ENCODE measurements at regions of chr5 and their contacts with region 1.

Region 1: DNA sequence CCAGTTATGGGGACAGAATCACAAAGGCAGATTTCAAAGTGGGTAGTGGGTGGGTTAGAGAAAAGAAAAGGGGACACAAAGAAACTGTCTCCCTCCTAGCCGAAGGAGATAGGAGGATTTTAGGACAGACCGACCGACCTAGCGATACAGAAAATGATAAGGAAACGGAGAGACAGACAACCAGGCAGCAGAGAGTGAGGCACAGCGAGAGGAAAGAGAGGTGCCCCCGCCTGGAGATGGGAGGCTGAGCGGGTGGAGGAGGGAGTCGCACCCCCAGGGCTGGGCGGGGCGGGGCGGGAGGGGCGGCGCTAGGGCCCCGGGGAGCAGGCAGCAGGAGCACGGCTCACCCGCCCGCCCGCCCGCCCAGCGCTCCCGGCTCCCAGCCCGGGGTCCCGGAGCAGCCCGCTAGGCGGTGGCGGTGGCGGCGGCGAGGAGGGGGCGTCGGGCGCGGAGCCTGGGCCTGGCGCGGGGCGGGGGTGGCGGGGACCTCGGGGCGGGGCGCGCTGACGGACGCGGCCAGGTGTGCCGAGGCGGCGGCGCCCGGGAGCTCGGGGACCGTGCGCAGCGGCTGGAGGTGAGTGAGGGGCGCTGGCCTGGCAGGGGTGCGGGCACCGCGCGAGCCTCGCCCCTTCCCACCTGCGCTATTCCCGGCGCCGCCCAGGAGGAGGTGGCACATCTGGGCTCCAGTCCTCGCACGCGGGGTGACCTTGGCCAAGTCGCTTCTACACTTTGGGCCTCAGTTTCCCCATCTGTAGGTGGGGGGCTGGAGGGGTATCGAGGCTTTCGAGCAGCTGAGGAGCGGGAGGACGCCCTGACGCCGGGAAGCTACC is 15.9 kb upstream of the SYNPO start:
- DNase-seq: peak; percentile 54
- ATAC-seq: peak; percentile 34
- H3K4me3 ChIP-seq: peak overlapping the region; percentile 46 to 83 (median 75)
- H3K4me3 Mint-ChIP-seq: peak overlapping the region; percentile 93
- H3K27ac ChIP-seq: peak overlapping the region in 1 of 2 donors; percentile 41
- H3K27ac Mint-ChIP-seq: peak overlapping the region; percentile 78
- H3K4me1 ChIP-seq: peaks cover 45 to 48% of the 10 kb centered on the region in 2 donors
- H3K4me1 Mint-ChIP-seq: peaks cover 55% of the 10 kb centered on the region
- H3K27me3 ChIP-seq: no peaks in the 10 kb centered on the region
- H3K27me3 Mint-ChIP-seq: no peaks in the 10 kb centered on the region
- CTCF ChIP-seq: no peak

Region 2: DNA sequence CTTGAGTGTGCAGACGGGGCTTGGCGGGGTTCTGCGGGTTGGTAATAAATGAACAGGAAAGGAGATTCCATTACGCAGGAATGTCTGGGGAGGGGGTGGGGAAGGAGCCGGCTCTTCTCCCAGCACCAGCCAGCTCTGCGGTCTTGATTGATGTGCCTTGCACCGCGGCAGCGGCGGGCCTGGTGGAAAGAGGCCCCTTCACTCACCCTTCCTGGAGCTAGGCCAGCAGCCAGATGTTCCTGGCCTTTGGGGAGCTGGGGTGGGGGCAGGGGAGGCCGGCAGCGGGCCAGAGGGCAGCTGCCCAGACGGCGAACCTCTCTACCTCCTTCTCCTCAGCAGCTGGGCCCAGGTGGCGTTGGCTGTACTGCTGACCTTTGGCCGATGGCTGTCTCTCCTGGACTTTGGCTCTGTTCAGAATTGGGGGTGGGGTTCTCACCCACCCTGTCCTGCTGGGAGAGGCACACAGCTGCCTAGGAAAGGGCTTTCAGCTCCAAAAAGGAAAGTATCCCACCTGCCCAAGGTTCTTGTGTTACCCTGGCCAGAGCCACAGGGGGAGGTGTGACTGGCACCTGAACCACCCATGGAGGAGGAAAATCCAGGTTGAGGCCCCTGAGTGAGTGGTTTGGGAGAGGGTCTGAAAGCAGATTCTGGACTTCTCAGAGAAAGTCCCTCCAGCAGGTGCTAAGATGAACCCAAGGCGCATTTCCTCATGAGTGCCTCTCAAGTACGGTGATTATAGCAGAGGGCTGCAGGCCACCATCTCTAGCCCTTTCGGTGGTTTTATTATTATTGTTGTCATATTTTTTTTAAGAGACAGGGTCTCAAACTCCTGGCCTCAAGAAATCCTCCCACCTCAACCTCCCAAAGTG is 42.1 kb before region 1 on chr5:
- CTCF ChIA-PET with region 1: no interaction called
- POLR2A ChIA-PET with region 1: no interaction called
- intact Hi-C with region 1: no loop called
- DNase-seq: no peak
- ATAC-seq: no peak
- H3K4me3 ChIP-seq: no peak overlapping the region
- H3K4me3 Mint-ChIP-seq: no peak overlapping the region
- H3K27ac ChIP-seq: no peak overlapping the region
- H3K27ac Mint-ChIP-seq: no peak overlapping the region
- H3K4me1 ChIP-seq: no peaks in the 10 kb centered on the region
- H3K4me1 Mint-ChIP-seq: no peaks in the 10 kb centered on the region
- H3K27me3 ChIP-seq: peaks cover 0 to 6% (median 2%) of the 10 kb centered on the region in 4 experiments
- H3K27me3 Mint-ChIP-seq: peaks cover 15% of the 10 kb centered on the region
- CTCF ChIP-seq: no peak

Region 3: GRCh38 chr5:150656191-150657132 is 31.9 kb after region 1 on chr5:
- CTCF ChIA-PET with region 1: interaction called, 8 read pairs
- POLR2A ChIA-PET with region 1: interaction called, 5 read pairs
- intact Hi-C with region 1: loop called (anchors 2 kb)
- DNase-seq: peak; percentile 89
- ATAC-seq: peak; percentile 91
- H3K4me3 ChIP-seq: peak overlapping the region; percentile 21 to 69 (median 59)
- H3K4me3 Mint-ChIP-seq: peak overlapping the region; percentile 81
- H3K27ac ChIP-seq: no peak overlapping the region
- H3K27ac Mint-ChIP-seq: peak overlapping the region; percentile 84
- H3K4me1 ChIP-seq: peaks cover 10 to 15% of the 10 kb centered on the region in 2 donors
- H3K4me1 Mint-ChIP-seq: peaks cover 19% of the 10 kb centered on the region
- H3K27me3 ChIP-seq: no peaks in the 10 kb centered on the region
- H3K27me3 Mint-ChIP-seq: peaks cover 4% of the 10 kb centered on the region
- CTCF ChIP-seq: peak; percentile 77

Measured in B cell (primary cell).